GM12878 (cell line): ENCODE measurements at regions of chr9 and their contacts with region 1.

Region 1: DNA sequence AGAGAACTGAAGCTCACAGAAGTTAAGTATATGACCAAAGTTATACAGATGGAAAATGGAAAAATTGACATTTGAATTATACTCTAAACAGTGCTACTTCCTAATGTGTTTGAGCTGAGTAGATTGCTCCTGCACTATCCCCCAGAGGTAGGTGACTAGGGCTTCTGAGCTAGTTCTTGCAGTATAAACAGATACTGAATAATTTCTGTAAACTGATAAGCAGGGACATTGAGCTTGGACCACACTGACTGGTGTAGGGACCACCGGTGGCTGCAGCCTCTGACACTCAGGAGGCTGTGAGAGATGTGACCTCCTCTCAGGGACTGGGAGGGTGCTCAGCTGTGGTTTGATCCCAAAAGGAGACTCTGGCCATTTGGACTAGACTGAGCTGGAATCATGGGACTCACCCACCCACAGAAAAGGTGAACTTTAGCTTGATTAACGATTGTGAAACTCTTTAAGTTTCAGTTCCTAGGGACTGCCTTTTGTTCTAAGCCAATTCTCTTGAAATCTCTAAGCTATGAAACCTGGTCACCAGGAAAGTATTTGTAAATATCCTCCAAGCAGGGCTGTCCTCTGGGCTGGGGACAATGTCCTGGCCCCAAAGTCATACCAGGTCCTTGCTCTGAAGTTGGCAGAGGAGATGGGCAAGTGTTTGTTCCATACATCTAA is 291.5 kb downstream of the SEC61B start:
- DNase-seq: peak; percentile 59
- ATAC-seq: peak; percentile 88
- H3K4me3 ChIP-seq: no peak overlapping the region
- H3K27ac ChIP-seq: peak overlapping the region; percentile 42; the same call in 1 of the 2 replicates
- H3K4me1 ChIP-seq: peaks cover 34% of the 10 kb centered on the region
- H3K27me3 ChIP-seq: no peaks in the 10 kb centered on the region
- CTCF ChIP-seq: no peak
- EP300 ChIP-seq: peak; percentile 85 to 95
- POLR2A ChIP-seq: no peak
- RAD21 ChIP-seq: no peak

Region 2: GRCh38 chr9:99433555-99433954 is 80.0 kb before region 1 on chr9:
- CTCF ChIA-PET with region 1: interaction called, 6 read pairs
- POLR2A ChIA-PET with region 1: no interaction called
- RAD21 ChIA-PET with region 1: interaction called, 19 read pairs
- SMC1A ChIA-PET with region 1: interaction called, 3 read pairs
- in situ Hi-C with region 1: no loop called
- intact Hi-C with region 1: no loop called
- DNase-seq: peak; percentile 49
- ATAC-seq: peak; percentile 100
- H3K4me3 ChIP-seq: no peak overlapping the region
- H3K27ac ChIP-seq: peak overlapping the region; percentile 35
- H3K4me1 ChIP-seq: peaks cover 14% of the 10 kb centered on the region
- H3K27me3 ChIP-seq: no peaks in the 10 kb centered on the region
- CTCF ChIP-seq: no peak
- EP300 ChIP-seq: peak; percentile 54 to 87; a peak in 2 of 4 replicates
- POLR2A ChIP-seq: peak; percentile 47; the same call in 1 of the 2 replicates
- RAD21 ChIP-seq: peak; percentile 2; the same call in 1 of the 2 replicates

Region 3: DNA sequence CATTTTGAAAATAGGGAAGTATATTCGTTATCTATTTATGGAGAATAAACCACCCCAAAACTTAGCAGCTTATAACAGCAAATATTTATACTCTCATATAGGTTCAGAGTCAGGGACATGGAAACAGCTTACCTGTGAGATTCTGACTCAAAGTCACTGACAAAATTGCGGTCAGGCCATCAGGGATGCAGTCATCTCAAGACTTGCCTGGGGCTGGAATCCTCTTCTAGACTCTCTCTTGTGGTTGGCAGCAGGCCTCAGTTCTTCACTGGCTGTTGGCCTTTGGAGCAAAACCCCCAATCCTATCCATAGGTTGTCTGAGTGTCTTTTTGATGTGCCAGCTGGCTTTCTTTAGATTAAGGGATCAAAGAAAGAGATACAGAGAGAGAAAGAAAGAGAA is 15.9 kb before region 1 on chr9:
- CTCF ChIA-PET with region 1: interaction called, 4 read pairs
- POLR2A ChIA-PET with region 1: interaction called, 4 read pairs
- RAD21 ChIA-PET with region 1: interaction called, 10 read pairs
- SMC1A ChIA-PET with region 1: interaction called, 8 read pairs
- in situ Hi-C with region 1: no loop called
- intact Hi-C with region 1: no loop called
- DNase-seq: no peak
- ATAC-seq: peak; percentile 52
- H3K4me3 ChIP-seq: no peak overlapping the region
- H3K27ac ChIP-seq: no peak overlapping the region
- H3K4me1 ChIP-seq: no peaks in the 10 kb centered on the region
- H3K27me3 ChIP-seq: no peaks in the 10 kb centered on the region
- CTCF ChIP-seq: no peak
- EP300 ChIP-seq: no peak
- POLR2A ChIP-seq: no peak
- RAD21 ChIP-seq: no peak

Region 4: DNA sequence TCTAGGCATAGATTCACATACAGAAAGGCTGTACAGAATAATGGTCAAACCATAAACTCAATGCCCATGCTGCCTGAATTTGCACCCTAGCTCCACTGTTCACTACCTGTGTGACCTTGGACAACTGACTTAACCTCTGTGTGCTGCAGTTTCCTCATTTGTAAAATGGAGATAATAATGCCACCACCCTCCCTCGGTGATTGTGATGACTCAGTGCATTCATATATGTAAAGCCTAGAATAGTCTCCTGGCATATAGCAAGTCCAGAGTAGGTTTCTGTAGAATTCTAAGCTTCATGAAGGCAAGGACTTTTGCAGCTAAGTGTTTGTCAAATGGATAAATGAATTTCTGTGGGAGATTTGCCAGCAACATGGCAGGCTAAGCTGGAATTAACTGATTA is 10.3 kb after region 1 on chr9:
- CTCF ChIA-PET with region 1: interaction called, 5 read pairs
- POLR2A ChIA-PET with region 1: interaction called, 3 read pairs
- RAD21 ChIA-PET with region 1: interaction called, 7 read pairs
- SMC1A ChIA-PET with region 1: interaction called, 12 read pairs
- in situ Hi-C with region 1: no loop called
- intact Hi-C with region 1: no loop called
- DNase-seq: no peak
- ATAC-seq: no peak
- H3K4me3 ChIP-seq: no peak overlapping the region
- H3K27ac ChIP-seq: no peak overlapping the region
- H3K4me1 ChIP-seq: no peaks in the 10 kb centered on the region
- H3K27me3 ChIP-seq: no peaks in the 10 kb centered on the region
- CTCF ChIP-seq: no peak
- EP300 ChIP-seq: no peak
- POLR2A ChIP-seq: no peak
- RAD21 ChIP-seq: no peak